ENCODE measurements at regions of chr11 and their contacts with region 1.

Region 1: DNA sequence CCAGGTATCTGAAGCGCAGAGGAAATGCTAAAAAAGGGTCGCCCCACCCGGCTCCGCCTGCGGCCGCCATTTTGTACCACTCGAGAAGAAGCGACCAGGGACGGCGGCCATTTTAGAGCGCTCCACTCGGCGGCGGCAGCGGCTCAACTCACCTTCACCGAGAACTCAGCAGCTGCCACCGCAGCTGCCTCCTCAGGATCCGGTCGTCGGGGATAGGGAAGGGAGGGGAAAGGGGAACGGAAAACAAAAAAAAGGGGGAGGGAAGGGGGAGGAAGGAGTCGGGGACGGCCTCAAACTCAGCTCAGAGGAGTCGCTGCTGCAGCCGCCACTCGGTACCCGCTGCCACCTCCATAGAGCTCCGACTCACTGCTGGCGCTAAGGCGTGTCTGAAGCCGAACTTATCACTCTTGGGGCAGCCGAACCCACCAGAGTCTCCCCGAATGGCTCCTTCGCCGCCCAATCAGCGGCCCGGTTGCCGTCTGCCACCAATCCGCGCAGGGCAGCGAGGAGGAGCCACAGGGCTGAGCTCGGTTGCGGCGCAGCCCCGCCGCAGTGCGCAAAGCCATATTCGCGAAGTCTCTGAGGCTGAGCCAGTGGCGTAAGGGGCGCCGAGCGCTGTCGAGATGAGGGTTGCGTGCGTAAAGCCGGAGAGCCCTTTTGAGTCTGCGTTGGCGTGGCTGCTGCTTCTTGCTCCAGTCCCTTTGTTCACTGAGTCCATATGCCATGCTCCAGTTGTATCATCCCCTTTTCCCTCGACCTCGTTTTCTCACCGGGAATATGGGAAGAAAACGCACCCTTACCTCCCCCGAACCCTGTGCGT is at the start of gene EIF4G2:
- DNase-seq: peak; percentile 95
- ATAC-seq: peak; percentile 97
- H3K4me3 ChIP-seq: peak within 1 kb of the TSS; percentile 88 to 99 (median 96)
- H3K27ac ChIP-seq: peak within 1 kb of the TSS; percentile 96
- H3K4me1 ChIP-seq: peaks cover 40% of the 10 kb centered on the region
- H3K27me3 ChIP-seq: no peaks in the 10 kb centered on the region; a peak in 1 of 5 replicates
- CTCF ChIP-seq: peak; percentile 18; the same call in 1 of the 2 replicates
- EP300 ChIP-seq: 0 out of 4 replicates have a peak, but pooled peaks of 1 of the 2 experiments have one; percentile 40
- POLR2A ChIP-seq: peak; percentile 100
- RAD21 ChIP-seq: no peak
- total RNA-seq, gene EIF4G2: 546 and 803 TPM in 2 replicates

Region 2: DNA sequence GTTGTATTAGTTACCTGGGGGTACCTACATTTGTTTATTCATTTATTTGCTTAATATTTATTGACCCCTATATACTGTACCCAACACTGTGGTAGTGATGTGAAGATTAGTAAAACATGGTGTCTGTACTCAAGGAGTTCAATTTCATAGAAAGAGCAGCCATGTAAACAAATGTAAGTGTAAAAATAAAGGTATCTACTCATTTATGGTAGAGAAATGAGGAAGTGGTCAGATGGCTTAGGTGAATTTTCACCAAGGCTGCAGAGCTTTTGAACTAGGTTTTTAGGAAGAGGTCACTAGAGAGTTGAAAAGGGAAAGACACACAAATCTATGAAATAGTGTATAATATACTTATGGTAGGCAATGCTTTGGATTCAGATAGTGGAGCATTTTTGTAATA is 46.6 kb before region 1 on chr11:
- CTCF ChIA-PET with region 1: no interaction called
- POLR2A ChIA-PET with region 1: interaction called, 14 read pairs
- in situ Hi-C with region 1: no loop called
- intact Hi-C with region 1: no loop called
- DNase-seq: no peak
- ATAC-seq: no peak
- H3K4me3 ChIP-seq: no peak overlapping the region
- H3K27ac ChIP-seq: no peak overlapping the region
- H3K4me1 ChIP-seq: peaks cover 13% of the 10 kb centered on the region
- H3K27me3 ChIP-seq: no peaks in the 10 kb centered on the region
- CTCF ChIP-seq: no peak
- EP300 ChIP-seq: no peak
- POLR2A ChIP-seq: no peak
- RAD21 ChIP-seq: no peak

Region 3: DNA sequence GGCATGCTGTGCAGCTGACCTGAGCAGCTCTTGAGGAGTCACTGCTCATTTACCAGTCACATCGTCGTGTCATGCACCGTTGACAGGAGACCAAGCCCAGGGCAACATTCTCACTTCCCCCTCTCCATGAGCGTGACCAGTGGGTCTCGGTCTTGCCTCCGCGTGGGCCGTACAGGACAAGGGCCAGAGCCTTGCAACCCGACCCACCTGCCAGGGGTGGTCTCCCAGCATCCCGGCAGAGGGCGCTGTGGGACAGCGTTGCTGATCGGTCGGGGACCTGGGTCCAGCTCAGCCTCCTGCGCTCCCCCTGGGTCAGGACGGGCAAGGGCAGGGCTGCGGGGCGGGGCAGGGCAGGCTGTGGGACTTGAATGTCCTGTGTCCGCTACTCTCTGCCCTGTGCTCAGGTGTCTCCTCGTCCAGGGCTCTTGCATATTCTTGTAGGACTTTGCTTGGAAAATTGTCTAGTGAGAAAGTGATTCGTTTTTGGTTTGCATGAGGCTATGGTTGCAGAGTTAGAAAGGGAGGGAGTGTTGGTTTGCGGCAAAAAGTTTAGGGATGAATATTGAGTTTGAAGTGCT is 16.3 kb before region 1 on chr11:
- CTCF ChIA-PET with region 1: no interaction called
- POLR2A ChIA-PET with region 1: interaction called, 104 read pairs
- in situ Hi-C with region 1: no loop called
- intact Hi-C with region 1: no loop called
- DNase-seq: peak; percentile 77
- ATAC-seq: peak; percentile 91
- H3K4me3 ChIP-seq: peak overlapping the region in 2 of 3 experiments; percentile 1 to 35; a peak in 1 of 6 replicates
- H3K27ac ChIP-seq: no peak overlapping the region
- H3K4me1 ChIP-seq: peaks cover 10% of the 10 kb centered on the region; the same call in 1 of the 2 replicates
- H3K27me3 ChIP-seq: peaks cover 0 to 18% of the 10 kb centered on the region in 2 experiments; a peak in 3 of 5 replicates
- CTCF ChIP-seq: peak; percentile 100
- EP300 ChIP-seq: no peak
- POLR2A ChIP-seq: no peak
- RAD21 ChIP-seq: peak; percentile 94

Region 4: GRCh38 chr11:10857709-10858438 is 49.1 kb after region 1 on chr11 and contains the start of gene ZBED5:
- CTCF ChIA-PET with region 1: no interaction called
- POLR2A ChIA-PET with region 1: interaction called, 130 read pairs
- in situ Hi-C with region 1: loop called (anchors 5 kb)
- intact Hi-C with region 1: loop called (anchors 2 kb)
- DNase-seq: peak; percentile 92
- ATAC-seq: peak; percentile 97
- H3K4me3 ChIP-seq: peak within 1 kb of the TSS; percentile 81 to 90 (median 87)
- H3K27ac ChIP-seq: peak within 1 kb of the TSS; percentile 92
- H3K4me1 ChIP-seq: peaks cover 22% of the 10 kb centered on the region
- H3K27me3 ChIP-seq: no peaks in the 10 kb centered on the region; a peak in 1 of 5 replicates
- CTCF ChIP-seq: no peak; the same call in none of the 2 replicates
- EP300 ChIP-seq: no peak
- POLR2A ChIP-seq: peak; percentile 84 to 92
- RAD21 ChIP-seq: no peak
- total RNA-seq, gene ZBED5: 11.7 and 18.2 TPM in 2 replicates

Region 5: DNA sequence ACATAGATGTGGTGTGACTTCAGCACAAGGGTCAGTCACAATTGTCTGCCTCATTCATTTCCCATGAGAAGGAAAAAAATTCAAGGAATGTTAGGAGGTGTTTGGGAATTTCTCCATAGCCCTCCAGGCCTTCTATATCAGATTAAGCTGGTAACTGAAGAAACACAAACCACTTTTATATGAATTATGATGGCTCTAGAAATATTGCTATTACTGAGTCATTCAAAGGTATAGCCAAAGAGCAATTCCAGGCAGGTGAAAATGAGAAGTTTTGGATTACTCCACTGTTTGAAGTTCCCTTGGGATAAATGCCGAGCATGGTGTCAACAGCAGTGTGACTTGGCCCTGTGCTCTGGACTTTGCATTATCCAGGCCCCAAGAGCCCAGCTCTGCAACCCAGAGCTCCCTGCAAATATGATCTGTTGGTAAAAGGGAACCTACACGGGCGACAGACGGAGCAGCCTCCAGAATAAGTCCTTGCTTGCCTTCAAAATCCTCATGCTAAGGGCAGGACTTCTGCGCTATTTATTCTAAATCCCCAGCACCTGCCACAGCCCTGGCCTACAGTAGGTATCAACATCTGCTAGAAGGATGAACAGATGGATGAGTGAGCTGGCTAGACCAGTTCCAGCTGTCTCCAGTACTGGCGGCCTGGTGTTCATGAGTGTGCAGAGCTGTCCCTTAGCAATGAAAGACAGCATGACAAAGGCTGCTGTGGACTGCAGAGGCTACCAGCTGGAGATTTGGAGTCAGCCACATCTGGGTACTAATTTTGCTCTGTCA is 116.6 kb after region 1 on chr11:
- CTCF ChIA-PET with region 1: no interaction called
- POLR2A ChIA-PET with region 1: interaction called, 9 read pairs
- in situ Hi-C with region 1: no loop called
- intact Hi-C with region 1: loop called (anchors 5 kb)
- DNase-seq: no peak
- ATAC-seq: peak; percentile 80
- H3K4me3 ChIP-seq: no peak overlapping the region
- H3K27ac ChIP-seq: no peak overlapping the region
- H3K4me1 ChIP-seq: peaks cover 22% of the 10 kb centered on the region
- H3K27me3 ChIP-seq: peaks cover under 1 to 9% of the 10 kb centered on the region in 2 experiments; a peak in 4 of 5 replicates
- CTCF ChIP-seq: no peak
- EP300 ChIP-seq: no peak
- POLR2A ChIP-seq: no peak
- RAD21 ChIP-seq: no peak